Body of pancreas (tissue), 4 donors: ENCODE measurements at regions of chr16 and their contacts with region 1.

Region 1: DNA sequence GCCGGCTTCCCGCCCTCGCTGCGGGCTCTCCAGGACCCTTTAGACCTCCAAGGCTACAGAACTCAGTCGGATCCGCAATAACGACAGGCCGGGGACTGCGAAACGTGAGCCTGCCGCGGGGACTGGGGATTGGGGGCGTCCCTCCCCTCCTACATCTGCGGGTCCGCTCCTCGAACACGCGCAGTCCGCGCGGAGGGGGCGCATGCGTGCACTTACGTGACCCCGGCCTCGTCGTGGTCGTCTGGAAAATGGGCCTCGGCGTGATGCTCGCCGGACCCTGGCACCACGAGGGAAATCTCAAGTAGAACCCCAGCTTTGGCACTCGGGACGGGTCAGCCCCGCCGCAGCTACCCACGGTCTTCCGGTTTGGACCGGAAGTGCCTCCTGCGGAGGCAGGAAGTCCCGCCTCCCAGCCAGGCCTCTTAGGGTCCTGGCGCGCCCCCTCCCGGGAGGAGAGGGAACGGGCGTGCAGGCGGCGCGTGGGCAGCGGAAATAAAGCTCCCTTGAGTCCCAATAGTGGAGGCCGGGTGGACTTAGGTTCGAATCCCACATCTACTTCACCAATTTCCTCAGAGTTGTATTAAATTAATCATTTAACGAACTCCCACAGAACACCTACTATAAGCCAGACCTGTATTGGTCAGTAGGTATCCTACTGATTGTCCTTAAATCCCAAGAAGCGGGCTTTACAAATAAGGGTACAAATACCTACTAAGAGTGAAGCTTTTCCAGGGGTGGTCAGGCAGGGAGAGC is at the start of gene TAF1C:
- DNase-seq: peak; percentile 94 to 96 (median 94)
- ATAC-seq: peak; percentile 97
- H3K4me3 ChIP-seq: peak within 1 kb of the TSS; percentile 26 to 51
- H3K27ac ChIP-seq: peak within 1 kb of the TSS; percentile 40 to 77 (median 56)
- H3K4me1 ChIP-seq: peaks cover 34% of the 10 kb centered on the region
- H3K27me3 ChIP-seq: no peaks in the 10 kb centered on the region
- CTCF ChIP-seq: peak; percentile 94 to 99 (median 97)
- POLR2A ChIP-seq: peak in 2 of 3 donors; percentile 59 to 63
- total RNA-seq, gene TAF1C: 33.5 to 80.8 TPM

Region 2: GRCh38 chr16:83975590-83976260 is 211.1 kb before region 1 on chr16:
- intact Hi-C with region 1: no loop called
- DNase-seq: no peak
- ATAC-seq: no peak
- H3K4me3 ChIP-seq: no peak overlapping the region
- H3K27ac ChIP-seq: no peak overlapping the region
- H3K4me1 ChIP-seq: no peaks in the 10 kb centered on the region
- H3K27me3 ChIP-seq: no peaks in the 10 kb centered on the region
- CTCF ChIP-seq: no peak
- POLR2A ChIP-seq: no peak

Region 3: GRCh38 chr16:84084570-84085270 is 102.1 kb before region 1 on chr16:
- intact Hi-C with region 1: loop called (anchors 10 kb)
- DNase-seq: peak; percentile 72 to 82 (median 76)
- ATAC-seq: peak; percentile 79
- H3K4me3 ChIP-seq: no peak overlapping the region
- H3K27ac ChIP-seq: no peak overlapping the region
- H3K4me1 ChIP-seq: no peaks in the 10 kb centered on the region
- H3K27me3 ChIP-seq: no peaks in the 10 kb centered on the region
- CTCF ChIP-seq: peak; percentile 48 to 72 (median 65)
- POLR2A ChIP-seq: no peak

Region 4: DNA sequence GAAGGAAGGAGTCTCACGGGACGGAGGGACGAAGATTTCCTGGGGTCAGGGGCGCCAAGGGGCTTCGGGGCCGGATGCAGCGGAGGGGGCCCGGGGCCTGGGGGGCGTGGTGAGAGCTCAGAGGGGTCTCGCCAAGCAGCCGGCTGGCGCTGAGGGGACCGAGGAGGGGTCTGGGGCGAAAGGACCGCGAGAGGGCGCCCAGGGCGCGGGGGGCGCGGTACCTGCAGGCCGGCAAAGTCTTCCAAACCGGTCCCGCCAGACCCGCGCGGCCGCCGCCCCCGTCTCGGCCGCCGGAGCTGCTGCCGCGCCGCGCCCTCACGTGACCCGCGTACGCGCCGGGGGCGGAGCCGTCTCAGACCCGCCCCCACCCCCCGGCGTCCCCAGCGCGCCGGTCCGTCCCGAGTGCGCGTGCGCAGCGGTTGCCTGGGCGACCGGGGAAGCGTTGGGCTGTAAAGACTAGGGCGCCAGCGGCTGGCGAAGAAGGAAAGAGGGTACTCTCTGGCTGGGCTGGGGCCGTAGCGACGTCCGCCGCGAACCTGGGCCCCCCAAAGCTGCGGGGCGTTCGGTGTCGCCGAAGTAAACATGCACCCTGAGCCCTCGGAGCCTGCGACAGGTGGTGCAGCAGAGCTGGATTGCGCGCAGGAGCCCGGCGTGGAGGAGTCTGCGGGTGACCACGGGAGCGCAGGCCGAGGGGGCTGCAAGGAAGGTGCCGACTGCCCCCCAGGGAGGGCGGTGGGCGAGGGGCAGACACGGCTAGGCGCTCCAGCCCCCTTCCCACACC is 41.8 kb before region 1 on chr16 and contains the starts of genes DNAAF1 and HSDL1:
- intact Hi-C with region 1: loop called (anchors 5 kb)
- DNase-seq: peak; percentile 90 to 94 (median 93)
- ATAC-seq: peak; percentile 95
- H3K4me3 ChIP-seq: peak within 1 kb of the TSS; percentile 85 to 95
- H3K27ac ChIP-seq: peak within 1 kb of the TSS in 3 of 4 donors; percentile 62 to 76 (median 69)
- H3K4me1 ChIP-seq: peaks cover 9% of the 10 kb centered on the region
- H3K27me3 ChIP-seq: no peaks in the 10 kb centered on the region
- CTCF ChIP-seq: peak in 1 of 7 experiments; percentile 6
- POLR2A ChIP-seq: peak in 2 of 3 donors; percentile 28 to 30
- total RNA-seq, gene DNAAF1: 0.99 to 1.3 TPM
- total RNA-seq, gene HSDL1: 6.3 to 8.0 TPM